ENCODE measurements at regions of chr18 and their contacts with region 1.

Region 1: DNA sequence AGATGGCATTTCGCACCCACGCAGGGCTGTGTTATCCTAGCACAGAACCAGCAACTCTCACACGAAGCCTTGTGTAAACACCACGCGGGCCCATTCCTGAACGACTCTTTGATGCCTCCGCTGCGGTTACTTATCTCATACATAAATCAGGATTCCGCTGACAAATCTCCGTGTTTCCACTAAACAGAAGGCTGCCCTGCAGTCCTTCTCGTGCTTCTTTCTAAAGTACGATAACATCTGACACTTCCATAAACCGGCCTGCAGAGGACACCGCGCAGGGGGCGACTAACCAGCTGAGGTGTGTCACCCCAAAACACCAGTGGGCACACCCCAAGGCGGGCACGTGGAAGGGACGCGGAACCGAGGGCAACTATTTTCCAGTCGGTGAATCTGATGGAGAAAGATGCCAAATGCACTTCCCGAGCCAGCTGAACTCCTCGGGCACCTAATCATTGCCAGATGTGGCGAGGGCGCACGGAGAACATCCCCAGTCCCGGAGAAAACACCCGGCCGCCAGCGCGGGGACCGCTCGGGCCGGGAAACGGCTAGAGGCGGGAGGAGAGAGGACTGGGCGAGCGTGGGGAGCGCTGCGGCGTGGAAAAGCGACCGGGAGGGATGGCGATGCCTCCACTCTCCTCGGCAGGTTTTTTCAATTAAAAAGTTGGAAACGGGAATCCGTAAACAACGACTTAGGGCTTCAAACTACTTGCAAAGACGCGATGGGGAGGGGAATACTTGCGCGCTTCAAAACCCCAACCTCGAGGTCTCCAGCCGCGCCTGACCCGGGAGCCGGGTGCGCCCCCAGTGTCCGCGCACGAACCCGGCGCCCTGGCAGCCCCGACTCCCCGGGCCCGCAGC is 721 bp downstream of the COLEC12 start:
- DNase-seq: no peak
- ATAC-seq: peak; percentile 45

Region 2: GRCh38 chr18:610214-610903 is 110.6 kb after region 1 on chr18:
- intact Hi-C with region 1: loop called (anchors 5 kb)
- DNase-seq: no peak
- ATAC-seq: peak; percentile 71